A673 (cell line): ENCODE measurements at regions of chr10 and their contacts with region 1.

Region 1: DNA sequence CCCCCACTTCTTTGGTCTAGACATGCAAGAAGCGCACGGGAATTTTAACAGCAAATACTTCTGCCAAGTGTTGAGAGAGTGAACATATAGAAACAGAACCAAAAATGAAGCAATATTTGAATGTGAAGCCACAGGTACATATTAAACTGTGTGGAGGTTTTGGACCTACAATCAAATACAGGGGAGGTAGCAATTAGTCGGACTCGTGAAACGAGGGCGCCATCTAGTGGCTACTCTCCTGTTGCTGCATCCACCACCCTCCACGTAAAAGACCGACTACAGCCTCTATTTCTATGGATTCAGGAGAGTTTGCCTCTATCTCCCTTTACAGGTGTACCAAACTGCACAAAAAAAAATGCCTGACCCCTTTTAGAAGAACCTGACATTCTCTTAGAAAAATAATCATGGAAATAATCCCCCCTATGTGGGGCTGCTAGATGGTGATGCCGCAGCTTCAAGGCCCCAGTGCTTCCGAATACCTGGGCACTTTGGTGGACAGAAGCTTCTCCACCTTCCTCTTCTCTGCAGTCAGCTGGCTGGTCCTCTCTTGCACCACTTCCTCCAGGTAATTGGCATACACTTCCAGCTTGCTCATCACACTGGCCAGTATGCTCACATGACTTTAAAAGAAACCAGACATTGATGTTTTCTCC is 31.7 kb downstream of the TECTB start:
- DNase-seq: peak; percentile 71
- H3K4me3 ChIP-seq: no peak overlapping the region
- H3K27ac ChIP-seq: no peak overlapping the region
- H3K4me1 ChIP-seq: no peaks in the 10 kb centered on the region
- H3K27me3 ChIP-seq: peaks cover 68% of the 10 kb centered on the region
- CTCF ChIP-seq: peak; percentile 93

Region 2: DNA sequence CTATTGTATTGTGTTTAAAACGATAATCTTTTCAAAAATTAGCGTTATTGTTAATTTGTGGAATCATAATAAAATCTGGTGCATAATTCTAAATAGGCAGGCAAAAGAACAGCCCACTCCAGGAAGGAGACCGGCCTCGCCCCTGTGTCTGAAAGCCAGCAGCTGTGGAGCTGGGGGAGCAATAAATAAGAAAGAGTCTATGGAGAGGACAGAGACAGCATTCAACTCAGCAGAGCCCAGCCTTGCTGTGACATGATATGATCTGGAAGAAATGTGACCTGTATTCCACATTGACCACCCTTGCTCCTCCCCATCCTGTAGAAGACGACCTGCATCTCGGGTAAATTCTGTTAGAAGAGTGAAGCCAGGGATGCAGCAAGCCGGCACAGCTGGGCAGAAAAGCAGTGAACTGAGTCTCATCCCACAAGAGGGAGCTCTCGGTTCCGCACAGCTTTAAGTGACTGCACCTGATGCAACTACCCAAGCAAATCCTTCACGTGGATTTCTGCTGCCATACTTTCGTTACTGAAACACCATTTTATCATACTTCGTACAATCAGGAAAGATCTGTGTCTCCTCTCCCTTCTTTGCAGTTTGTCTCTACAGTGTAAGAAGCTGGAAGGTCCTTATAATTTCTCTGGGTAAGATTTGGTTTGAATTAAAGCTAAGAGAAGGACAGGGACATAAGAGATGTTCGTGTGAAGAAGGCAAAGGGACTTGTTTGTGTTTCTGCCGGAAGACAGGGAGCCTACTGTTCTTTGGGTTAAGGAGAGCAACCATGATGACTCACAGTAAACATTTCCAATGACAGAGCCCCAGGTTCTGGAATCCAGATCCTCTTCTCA is 558.5 kb before region 1 on chr10:
- CTCF ChIA-PET with region 1: no interaction called
- POLR2A ChIA-PET with region 1: no interaction called
- intact Hi-C with region 1: loop called (anchors 2 kb)
- DNase-seq: peak; percentile 73
- H3K4me3 ChIP-seq: no peak overlapping the region
- H3K27ac ChIP-seq: no peak overlapping the region
- H3K4me1 ChIP-seq: no peaks in the 10 kb centered on the region
- H3K27me3 ChIP-seq: peaks cover 5% of the 10 kb centered on the region
- CTCF ChIP-seq: peak; percentile 77

Region 3: GRCh38 chr10:112115799-112116385 is 199.1 kb before region 1 on chr10:
- CTCF ChIA-PET with region 1: no interaction called
- POLR2A ChIA-PET with region 1: no interaction called
- intact Hi-C with region 1: loop called (anchors 2 kb)
- DNase-seq: peak; percentile 58
- H3K4me3 ChIP-seq: no peak overlapping the region
- H3K27ac ChIP-seq: no peak overlapping the region
- H3K4me1 ChIP-seq: no peaks in the 10 kb centered on the region
- H3K27me3 ChIP-seq: no peaks in the 10 kb centered on the region
- CTCF ChIP-seq: peak; percentile 92

Region 4: DNA sequence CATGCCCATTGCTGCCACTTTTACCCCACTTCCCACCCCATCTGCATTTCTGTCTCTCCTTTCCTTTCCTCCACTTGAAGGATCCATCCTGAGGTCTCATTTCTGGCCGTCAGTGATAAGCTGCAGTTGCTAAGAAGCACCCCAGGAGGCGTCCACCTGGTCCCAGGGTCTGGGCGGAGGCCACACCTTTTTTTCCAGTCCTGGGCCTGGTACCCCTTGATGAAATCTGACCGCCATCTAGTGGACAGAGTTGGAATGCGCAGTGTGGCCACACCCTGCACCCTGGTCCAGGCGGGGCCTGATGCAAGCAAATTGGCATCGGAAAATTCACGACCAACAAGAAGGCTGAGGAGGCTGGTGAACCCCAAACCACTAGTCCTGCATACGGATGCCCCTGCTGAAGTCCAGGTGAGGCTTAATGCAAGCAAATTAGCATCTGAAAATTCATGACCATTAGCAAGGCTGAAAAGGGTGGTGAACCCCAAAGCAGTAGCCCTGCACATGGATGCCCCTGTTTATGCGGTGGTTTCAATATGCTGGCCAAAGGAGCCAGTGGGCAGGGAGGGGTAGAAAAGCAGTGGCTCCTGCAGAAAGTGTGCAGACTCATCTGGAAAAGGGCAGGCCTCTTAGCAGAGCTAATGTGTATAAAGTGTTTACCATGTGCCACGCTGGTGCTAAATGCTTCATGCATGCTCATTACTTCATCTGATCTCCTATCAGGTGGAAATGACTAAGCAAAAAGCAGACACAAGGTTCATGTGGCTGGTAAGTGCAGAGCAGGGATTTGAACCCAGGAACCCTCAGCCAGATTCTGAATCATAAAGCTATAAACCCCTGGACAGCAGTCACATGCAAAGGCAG is 174.6 kb before region 1 on chr10:
- CTCF ChIA-PET with region 1: interaction called, 5 read pairs
- POLR2A ChIA-PET with region 1: no interaction called
- intact Hi-C with region 1: loop called (anchors 1 kb)
- DNase-seq: peak; percentile 80
- H3K4me3 ChIP-seq: no peak overlapping the region
- H3K27ac ChIP-seq: no peak overlapping the region
- H3K4me1 ChIP-seq: no peaks in the 10 kb centered on the region
- H3K27me3 ChIP-seq: no peaks in the 10 kb centered on the region
- CTCF ChIP-seq: peak; percentile 93

Region 5: DNA sequence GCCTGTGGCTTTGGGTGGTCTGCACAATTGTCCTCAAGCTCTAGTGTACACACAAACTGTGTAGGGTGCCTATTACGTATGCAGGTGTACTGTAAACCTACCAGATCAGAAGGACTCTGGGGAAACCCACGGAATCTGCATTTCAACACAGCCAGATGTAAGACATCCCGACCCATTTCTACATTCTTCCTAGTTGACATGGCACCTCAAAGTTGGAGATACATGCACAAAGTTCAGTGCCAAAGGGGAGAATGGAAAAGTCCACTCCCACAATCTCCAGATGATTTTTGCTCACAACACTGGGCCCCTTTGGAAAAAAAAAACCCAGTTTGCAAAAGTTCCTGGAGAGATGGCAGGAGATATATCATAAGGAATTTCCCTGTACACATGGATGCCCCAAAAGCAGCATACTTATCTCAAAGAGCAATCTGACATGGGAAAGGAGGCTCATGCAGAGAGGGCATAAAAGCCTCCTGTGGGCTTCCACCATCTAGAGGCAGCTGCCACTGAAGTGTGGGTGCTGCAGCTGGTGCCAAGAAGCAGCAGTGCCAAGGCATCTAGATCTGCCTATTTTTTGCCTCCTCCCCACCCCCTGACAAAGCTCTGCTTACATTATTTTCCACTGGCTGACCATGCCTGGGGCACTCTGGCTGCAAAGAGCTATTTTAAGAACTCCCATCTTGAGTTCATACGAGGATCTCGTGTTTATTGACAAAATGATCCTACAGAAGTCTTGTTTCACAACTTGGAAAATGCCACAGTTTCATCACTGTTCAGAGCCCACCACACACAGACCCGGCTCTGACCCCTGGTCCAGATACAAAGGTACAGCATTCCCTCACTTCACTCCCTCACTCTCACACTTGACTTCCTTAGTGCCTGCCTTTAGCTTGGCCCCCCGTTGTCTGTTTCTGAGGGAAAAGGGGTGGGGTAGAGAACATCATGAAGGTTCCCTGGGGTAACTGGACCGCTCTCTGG is 18.8 kb before region 1 on chr10:
- CTCF ChIA-PET with region 1: no interaction called
- POLR2A ChIA-PET with region 1: no interaction called
- intact Hi-C with region 1: no loop called
- DNase-seq: no peak
- H3K4me3 ChIP-seq: no peak overlapping the region
- H3K27ac ChIP-seq: no peak overlapping the region
- H3K4me1 ChIP-seq: no peaks in the 10 kb centered on the region
- H3K27me3 ChIP-seq: no peaks in the 10 kb centered on the region
- CTCF ChIP-seq: no peak

Region 6: DNA sequence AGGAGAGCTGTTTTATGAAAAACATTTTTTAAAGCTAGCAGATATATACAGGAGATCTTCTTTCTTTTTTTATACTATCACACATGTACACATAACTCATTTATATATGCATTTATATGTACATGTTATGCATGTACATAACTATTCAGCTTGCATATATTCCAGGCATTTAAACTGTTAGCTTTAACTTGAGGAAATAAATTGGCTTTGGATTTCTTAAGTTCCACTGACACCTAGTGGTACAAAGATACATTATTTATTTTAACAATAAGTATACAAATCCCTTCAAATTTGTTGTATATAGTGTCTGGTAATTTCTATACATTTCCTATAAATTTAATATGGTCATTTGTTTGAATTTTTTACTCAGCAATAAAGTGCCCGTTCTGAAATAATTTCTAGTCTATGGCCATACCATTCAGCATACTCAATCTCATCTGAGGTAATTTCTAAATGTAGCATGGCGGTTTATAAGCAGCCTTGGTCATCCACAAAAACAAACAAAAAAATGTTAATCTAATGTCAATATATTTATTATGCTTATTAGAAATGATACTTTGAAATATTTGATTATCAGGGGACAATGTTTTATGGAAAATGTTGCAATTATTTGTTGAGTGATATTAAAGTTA is 120.2 kb after region 1 on chr10:
- CTCF ChIA-PET with region 1: interaction called, 11 read pairs
- POLR2A ChIA-PET with region 1: no interaction called
- intact Hi-C with region 1: loop called (anchors 5 kb)
- DNase-seq: peak; percentile 60
- H3K4me3 ChIP-seq: no peak overlapping the region
- H3K27ac ChIP-seq: no peak overlapping the region
- H3K4me1 ChIP-seq: no peaks in the 10 kb centered on the region
- H3K27me3 ChIP-seq: no peaks in the 10 kb centered on the region
- CTCF ChIP-seq: peak; percentile 61

Region 7: GRCh38 chr10:112775381-112775780 is 460.4 kb after region 1 on chr10:
- CTCF ChIA-PET with region 1: no interaction called
- POLR2A ChIA-PET with region 1: no interaction called
- intact Hi-C with region 1: no loop called
- DNase-seq: no peak
- H3K4me3 ChIP-seq: no peak overlapping the region
- H3K27ac ChIP-seq: no peak overlapping the region
- H3K4me1 ChIP-seq: peaks cover 11% of the 10 kb centered on the region
- H3K27me3 ChIP-seq: no peaks in the 10 kb centered on the region
- CTCF ChIP-seq: no peak